RWPE1 (cell line): ENCODE measurements at regions of chr9 and their contacts with region 1.

Region 1: GRCh38 chr9:72589667-72590521 is 68.5 kb downstream of the TMC1 start:
- DNase-seq: no peak
- H3K27ac ChIP-seq: no peak overlapping the region
- CTCF ChIP-seq: no peak

Region 2: DNA sequence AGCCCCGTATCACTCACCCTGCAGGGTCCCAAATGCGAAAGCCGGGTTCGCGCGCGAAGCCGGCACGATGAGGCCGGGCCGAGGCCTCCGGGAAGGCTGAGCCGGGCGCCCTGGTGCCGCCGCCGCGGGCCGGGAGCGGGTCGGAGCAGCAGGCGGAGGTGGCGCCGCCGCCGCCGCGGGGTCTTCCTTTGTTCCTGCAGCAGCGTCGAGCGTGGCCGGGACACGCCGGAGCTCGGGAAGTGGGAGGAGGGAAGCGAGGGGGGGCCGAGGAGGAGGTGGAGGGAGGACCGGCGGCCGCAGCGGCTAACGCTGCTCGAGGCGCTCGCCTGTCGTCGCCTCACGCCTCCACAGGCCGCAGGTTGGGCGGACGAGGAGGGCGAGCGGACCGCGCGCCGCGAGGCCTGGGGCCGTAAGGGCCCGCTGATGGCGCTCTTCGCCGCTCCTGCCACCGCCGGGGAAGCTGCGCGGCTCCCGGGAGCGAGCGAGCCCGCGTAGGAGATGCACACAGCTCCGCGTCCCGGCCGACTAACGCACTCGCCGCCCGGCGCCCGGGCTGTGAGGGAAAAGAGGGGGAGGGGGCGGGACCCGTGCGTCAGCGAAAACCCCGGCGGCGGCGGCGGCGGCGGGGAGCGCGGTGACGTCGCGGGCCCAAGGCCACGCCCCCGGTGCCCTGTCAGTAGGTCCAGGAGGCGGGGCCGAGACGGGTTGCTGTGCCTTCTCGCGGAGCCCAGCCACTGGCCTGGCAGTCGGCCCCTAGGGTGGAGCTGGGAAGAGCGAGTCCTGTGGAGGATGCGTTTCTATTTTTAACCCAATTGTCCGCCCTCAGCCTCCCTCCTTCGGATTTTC is 225.0 kb before region 1 on chr9 and contains the start of gene ZFAND5:
- CTCF ChIA-PET with region 1: interaction called, 8 read pairs
- POLR2A ChIA-PET with region 1: interaction called, 11 read pairs
- DNase-seq: peak; percentile 99
- H3K27ac ChIP-seq: peak within 1 kb of the TSS; percentile 99
- CTCF ChIP-seq: 0 out of 2 replicates have a peak, but pooled peaks have one; percentile 8

Region 3: DNA sequence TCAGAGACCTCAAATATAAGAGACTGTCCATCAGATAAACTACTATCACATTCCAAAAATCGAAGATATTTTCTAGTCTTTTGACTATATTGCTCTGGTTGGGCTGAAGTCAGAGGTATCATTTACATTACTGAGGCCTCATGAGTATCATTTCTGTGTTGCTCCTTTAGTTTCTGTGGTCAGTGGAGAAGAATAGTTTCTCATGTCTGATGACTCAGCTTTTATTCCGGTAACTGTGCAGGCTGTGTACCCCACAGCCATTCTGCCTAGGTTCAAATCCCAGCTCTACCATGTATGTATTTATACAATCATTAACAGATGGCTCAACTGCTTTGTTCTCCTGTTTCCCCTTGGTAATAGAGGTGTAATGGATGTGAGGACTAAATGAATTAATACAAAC is 183.7 kb after region 1 on chr9:
- CTCF ChIA-PET with region 1: no interaction called
- POLR2A ChIA-PET with region 1: no interaction called
- DNase-seq: no peak
- H3K27ac ChIP-seq: no peak overlapping the region
- CTCF ChIP-seq: no peak